ENCODE measurements at regions of chr2 and their contacts with region 1.

Region 1: GRCh38 chr2:160406591-160407392 is 86.8 kb downstream of the RBMS1 start:
- DNase-seq: peak; percentile 71
- ATAC-seq: peak; percentile 74
- H3K4me3 Mint-ChIP-seq: peak overlapping the region; percentile 91
- H3K27ac Mint-ChIP-seq: peak overlapping the region; percentile 92
- H3K4me1 Mint-ChIP-seq: peaks cover 77% of the 10 kb centered on the region
- H3K27me3 Mint-ChIP-seq: no peaks in the 10 kb centered on the region
- CTCF ChIP-seq: no peak

Region 2: DNA sequence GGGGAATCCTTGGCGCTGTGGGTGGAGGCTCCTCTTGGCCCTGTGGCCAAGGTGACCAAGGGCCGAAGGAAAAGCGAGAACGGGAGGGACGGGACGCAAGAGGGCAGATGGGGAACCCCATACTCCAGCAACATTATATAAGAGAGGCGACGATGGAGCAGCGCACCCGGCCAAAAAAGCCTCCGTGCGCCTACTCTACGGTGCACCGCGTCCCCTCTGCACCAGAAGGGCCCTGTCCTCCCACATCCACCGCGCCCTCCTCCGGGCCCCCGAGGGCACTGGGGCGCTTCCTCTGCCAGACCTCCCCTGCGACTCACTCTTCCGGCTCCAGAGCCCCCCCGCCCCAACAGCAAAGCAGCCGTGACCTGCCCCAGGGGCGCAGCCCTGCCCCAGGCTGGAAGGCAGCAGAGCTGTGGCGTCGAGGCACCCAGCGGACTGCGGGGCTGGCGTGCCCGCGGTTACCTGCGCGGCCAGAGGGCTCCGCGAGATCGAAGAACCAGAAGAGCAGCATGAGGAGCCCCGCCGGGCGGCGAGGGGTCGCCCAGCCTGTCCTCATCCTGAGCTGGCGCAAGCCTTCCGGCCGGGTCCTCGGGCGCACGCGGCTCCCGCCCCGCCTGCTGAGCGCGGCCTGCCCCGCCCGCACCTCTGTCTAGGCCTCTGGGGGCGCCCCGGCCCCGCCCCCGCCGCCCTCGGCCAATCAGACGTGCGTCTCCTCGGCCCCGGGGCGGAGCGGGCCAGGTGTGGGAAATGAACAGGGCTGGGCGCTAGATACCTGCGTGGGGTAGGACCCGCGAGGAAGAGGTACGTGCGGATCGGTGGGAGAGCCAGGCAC is 502.4 kb before region 1 on chr2:
- CTCF ChIA-PET with region 1: no interaction called
- POLR2A ChIA-PET with region 1: interaction called, 3 read pairs
- intact Hi-C with region 1: loop called (anchors 10 kb)
- DNase-seq: peak; percentile 87
- ATAC-seq: peak; percentile 85
- H3K4me3 Mint-ChIP-seq: peak within 1 kb of the TSS; percentile 99
- H3K27ac Mint-ChIP-seq: peak within 1 kb of the TSS; percentile 98
- H3K4me1 Mint-ChIP-seq: peaks cover 57% of the 10 kb centered on the region
- H3K27me3 Mint-ChIP-seq: no peaks in the 10 kb centered on the region
- CTCF ChIP-seq: no peak

Region 3: DNA sequence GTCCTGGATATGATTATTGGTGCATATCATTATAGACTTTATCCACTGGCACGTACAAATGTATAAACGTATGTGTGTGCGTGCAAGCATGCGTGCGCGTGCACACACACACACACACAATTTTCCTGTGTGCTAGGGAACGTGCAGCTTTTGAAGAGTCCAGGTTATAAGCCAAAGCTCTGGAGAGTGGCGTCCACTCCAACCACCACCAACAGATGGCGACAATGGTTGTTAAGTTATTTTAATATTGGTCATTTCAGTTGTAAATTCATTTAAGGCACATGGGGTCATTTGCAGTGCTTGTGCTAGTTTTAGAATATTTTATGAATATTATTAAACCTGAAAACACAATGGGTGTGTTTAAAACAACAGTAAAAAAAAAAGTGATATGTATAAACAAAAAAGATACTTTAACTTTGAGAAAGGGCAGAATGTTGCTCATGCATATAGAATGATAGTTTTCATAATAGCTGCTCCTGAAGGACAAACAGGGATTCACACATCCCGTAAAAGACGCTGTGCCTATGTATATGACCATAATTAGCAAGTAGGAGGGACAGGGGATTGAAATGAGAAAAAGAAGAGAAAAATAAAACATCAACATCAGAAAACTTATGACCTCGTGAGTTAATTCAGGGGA is 82.5 kb before region 1 on chr2:
- CTCF ChIA-PET with region 1: interaction called, 3 read pairs
- POLR2A ChIA-PET with region 1: no interaction called
- intact Hi-C with region 1: loop called (anchors 1 kb)
- DNase-seq: peak; percentile 20
- ATAC-seq: peak; percentile 47
- H3K4me3 Mint-ChIP-seq: no peak overlapping the region
- H3K27ac Mint-ChIP-seq: no peak overlapping the region
- H3K4me1 Mint-ChIP-seq: peaks cover 46% of the 10 kb centered on the region
- H3K27me3 Mint-ChIP-seq: no peaks in the 10 kb centered on the region
- CTCF ChIP-seq: no peak

Region 4: DNA sequence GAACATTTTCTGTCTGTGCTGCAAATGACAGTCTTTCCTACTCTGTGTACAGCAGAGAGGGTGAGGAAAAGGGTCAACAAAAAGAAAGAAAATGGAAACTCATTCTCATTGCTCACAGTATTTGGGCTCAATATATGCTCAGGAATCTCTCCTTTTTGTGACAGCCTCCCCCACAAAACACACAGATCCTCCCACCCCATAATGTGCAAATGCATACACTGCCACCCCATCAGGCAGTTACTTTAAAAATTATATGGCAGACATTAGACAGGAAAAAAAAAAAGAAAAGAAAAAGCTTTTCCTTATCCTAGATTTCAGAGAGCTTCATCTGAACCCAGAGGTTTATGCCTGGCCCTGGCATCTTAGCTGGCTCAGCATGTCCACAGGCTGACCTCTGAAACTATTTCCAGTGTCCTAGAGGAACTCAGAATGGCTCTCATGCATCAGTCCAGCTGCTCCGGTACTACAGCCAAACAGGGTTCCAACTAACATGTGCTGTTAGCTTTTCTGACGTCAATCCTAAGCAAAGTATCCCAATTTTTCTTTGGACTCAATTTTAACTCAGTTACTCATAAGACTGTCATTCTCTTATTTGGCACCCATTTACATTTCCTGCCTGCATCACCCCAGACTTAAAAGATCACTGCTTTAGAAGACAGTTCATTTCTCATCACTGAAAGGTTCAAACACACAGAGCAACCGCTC is 19.1 kb before region 1 on chr2:
- CTCF ChIA-PET with region 1: no interaction called
- POLR2A ChIA-PET with region 1: interaction called, 4 read pairs
- intact Hi-C with region 1: loop called (anchors 2 kb)
- DNase-seq: no peak
- ATAC-seq: no peak
- H3K4me3 Mint-ChIP-seq: no peak overlapping the region
- H3K27ac Mint-ChIP-seq: no peak overlapping the region
- H3K4me1 Mint-ChIP-seq: peaks cover 49% of the 10 kb centered on the region
- H3K27me3 Mint-ChIP-seq: no peaks in the 10 kb centered on the region
- CTCF ChIP-seq: no peak

Region 5: DNA sequence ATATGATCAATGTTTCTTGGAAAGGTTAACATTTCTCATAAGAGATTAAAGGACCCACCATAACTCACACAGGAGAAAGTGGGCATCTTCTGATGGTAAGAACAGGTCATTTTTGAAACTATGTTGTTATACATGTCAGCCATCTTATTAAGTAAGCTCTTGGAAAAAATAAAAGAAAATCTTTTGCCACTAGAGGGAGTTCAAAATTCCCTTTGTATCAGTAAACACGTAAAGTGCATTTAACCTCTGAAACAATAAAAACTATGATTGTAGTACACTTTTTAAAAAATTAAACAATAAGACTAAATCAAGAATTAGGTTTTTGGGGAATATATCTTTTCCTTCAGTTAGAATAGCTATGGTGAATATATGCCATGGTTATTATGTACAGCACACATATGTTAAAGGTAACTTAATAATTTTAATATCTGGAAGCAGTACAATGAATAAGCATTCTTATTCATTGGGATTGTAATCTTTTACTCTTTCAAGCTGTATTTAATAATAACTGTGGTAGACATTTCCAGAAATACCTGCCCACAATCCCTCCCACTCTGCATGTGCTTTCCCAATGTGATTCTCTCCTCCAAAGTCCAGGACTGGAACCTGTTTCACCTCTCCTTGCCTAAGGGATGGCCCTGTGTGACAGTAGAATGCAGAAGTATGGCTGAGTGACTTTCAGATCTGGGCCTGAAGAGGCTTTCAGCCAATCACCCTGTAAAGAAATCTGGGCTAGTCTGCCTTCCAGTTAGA is 22.6 kb after region 1 on chr2:
- CTCF ChIA-PET with region 1: interaction called, 16 read pairs
- POLR2A ChIA-PET with region 1: interaction called, 37 read pairs
- intact Hi-C with region 1: loop called (anchors 1 kb)
- DNase-seq: no peak
- ATAC-seq: peak; percentile 46
- H3K4me3 Mint-ChIP-seq: no peak overlapping the region
- H3K27ac Mint-ChIP-seq: peak overlapping the region; percentile 54
- H3K4me1 Mint-ChIP-seq: peaks cover 34% of the 10 kb centered on the region
- H3K27me3 Mint-ChIP-seq: no peaks in the 10 kb centered on the region
- CTCF ChIP-seq: peak; percentile 65

Region 6: GRCh38 chr2:162318328-162319180 is 1911.8 kb after region 1 on chr2 and contains the start of gene IFIH1:
- CTCF ChIA-PET with region 1: no interaction called
- POLR2A ChIA-PET with region 1: no interaction called
- intact Hi-C with region 1: loop called (anchors 10 kb)
- DNase-seq: peak; percentile 72
- ATAC-seq: peak; percentile 93
- H3K4me3 Mint-ChIP-seq: peak within 1 kb of the TSS; percentile 94
- H3K27ac Mint-ChIP-seq: peak within 1 kb of the TSS; percentile 99
- H3K4me1 Mint-ChIP-seq: peaks cover 68% of the 10 kb centered on the region
- H3K27me3 Mint-ChIP-seq: no peaks in the 10 kb centered on the region
- CTCF ChIP-seq: no peak
- total RNA-seq, gene IFIH1: 61.8 and 63.0 TPM in 2 replicates

Measured in activated B cell treated with CpG ODN at 0.5 μM for 24 hours (primary cell).